Posterior vena cava (tissue), 2 donors: ENCODE measurements at regions of chr7 and their contacts with region 1.

Region 1: GRCh38 chr7:22488643-22489462 is 11.1 kb downstream of the STEAP1B start:
- DNase-seq: no peak

Region 2: DNA sequence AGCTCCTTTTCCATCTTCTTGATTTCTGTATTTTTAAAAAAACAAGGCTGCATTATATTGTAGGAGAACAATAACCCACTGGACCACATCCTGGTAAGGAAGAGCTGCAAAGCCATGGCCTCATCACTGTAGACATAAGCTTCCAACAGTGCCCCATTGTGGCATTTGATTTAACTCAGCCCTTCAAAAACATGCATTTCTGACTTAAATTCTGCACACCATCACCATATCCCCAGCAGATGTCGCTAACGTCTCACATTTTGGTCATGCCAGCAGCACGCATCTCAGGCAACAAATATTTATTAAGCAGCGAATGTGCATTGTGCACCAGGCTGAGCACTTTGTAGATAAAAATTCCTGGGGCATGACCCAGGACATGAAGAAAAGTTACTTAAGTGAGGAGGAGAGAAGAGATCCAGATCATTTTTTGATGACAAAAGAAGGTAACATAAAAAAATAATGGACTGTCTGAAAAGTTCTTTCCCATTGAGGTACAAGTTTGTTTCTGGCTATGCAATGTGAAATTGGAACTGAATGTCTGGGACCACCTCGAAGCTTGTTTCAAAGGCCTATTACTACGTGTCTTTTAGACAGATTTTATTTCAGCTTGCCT is 378.5 kb before region 1 on chr7:
- intact Hi-C with region 1: loop called (anchors 1 to 2 kb)
- DNase-seq: no peak

Region 3: DNA sequence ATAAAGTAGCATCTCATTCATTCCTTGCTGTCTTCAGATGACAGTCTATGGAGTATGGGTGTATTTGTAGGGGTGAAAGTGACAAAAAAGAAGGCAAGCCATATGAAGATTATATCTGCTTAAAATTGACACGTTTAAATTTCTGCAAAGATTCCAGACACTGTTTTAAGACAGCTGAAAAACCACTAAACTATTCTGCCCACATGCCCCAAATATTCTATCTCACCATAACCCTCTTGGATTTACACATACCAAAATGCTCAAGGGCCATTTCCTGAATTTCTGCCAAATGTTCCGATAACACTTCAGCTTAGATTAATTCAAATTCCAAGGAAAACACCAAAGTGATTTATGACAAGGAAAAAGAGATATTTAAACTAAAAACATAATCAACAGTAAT is 138.3 kb after region 1 on chr7:
- intact Hi-C with region 1: no loop called
- DNase-seq: no peak